Natural killer cell (primary cell): ENCODE measurements at regions of chr2 and their contacts with region 1.

Region 1: GRCh38 chr2:227890495-227891079 is 19.2 kb downstream of the DAW1 start:
- DNase-seq: peak in 1 of 2 donors; percentile 58
- ATAC-seq: peak in 1 of 3 donors; percentile 62
- H3K4me3 ChIP-seq: no peak overlapping the region
- H3K4me3 Mint-ChIP-seq: no peak overlapping the region
- H3K27ac ChIP-seq: no peak overlapping the region
- H3K27ac Mint-ChIP-seq: no peak overlapping the region
- H3K4me1 ChIP-seq: no peaks in the 10 kb centered on the region
- H3K4me1 Mint-ChIP-seq: no peaks in the 10 kb centered on the region
- H3K27me3 ChIP-seq: no peaks in the 10 kb centered on the region
- H3K27me3 Mint-ChIP-seq: no peaks in the 10 kb centered on the region
- CTCF ChIP-seq: peak; percentile 71

Region 2: GRCh38 chr2:228063558-228063957 is 173.0 kb after region 1 on chr2:
- intact Hi-C with region 1: no loop called
- DNase-seq: no peak
- ATAC-seq: no peak
- H3K4me3 ChIP-seq: no peak overlapping the region
- H3K4me3 Mint-ChIP-seq: no peak overlapping the region
- H3K27ac ChIP-seq: no peak overlapping the region
- H3K27ac Mint-ChIP-seq: no peak overlapping the region
- H3K4me1 ChIP-seq: no peaks in the 10 kb centered on the region
- H3K4me1 Mint-ChIP-seq: no peaks in the 10 kb centered on the region
- H3K27me3 ChIP-seq: no peaks in the 10 kb centered on the region
- H3K27me3 Mint-ChIP-seq: no peaks in the 10 kb centered on the region
- CTCF ChIP-seq: no peak

Region 3: GRCh38 chr2:229586746-229587705 is 1696.4 kb after region 1 on chr2:
- intact Hi-C with region 1: loop called (anchors 10 kb)
- DNase-seq: peak in 1 of 2 donors; percentile 15
- ATAC-seq: peak in 1 of 3 donors; percentile 39
- H3K4me3 ChIP-seq: no peak overlapping the region
- H3K4me3 Mint-ChIP-seq: no peak overlapping the region
- H3K27ac ChIP-seq: no peak overlapping the region
- H3K27ac Mint-ChIP-seq: no peak overlapping the region
- H3K4me1 ChIP-seq: no peaks in the 10 kb centered on the region
- H3K4me1 Mint-ChIP-seq: no peaks in the 10 kb centered on the region
- H3K27me3 ChIP-seq: no peaks in the 10 kb centered on the region
- H3K27me3 Mint-ChIP-seq: peaks cover 13 to 23% of the 10 kb centered on the region in 2 donors
- CTCF ChIP-seq: no peak